ENCODE measurements at regions of chr3 and their contacts with region 1.

Region 1: GRCh38 chr3:160003520-160004128 is 15.0 kb downstream of the IL12A start:
- DNase-seq: no peak
- H3K4me3 ChIP-seq: no peak overlapping the region
- H3K27ac ChIP-seq: no peak overlapping the region
- H3K27me3 ChIP-seq: no peaks in the 10 kb centered on the region
- CTCF ChIP-seq: peak; percentile 41

Region 2: GRCh38 chr3:159828542-159828943 is 175.1 kb before region 1 on chr3:
- CTCF ChIA-PET with region 1: interaction called, 122 read pairs
- POLR2A ChIA-PET with region 1: no interaction called
- DNase-seq: no peak
- H3K4me3 ChIP-seq: no peak overlapping the region
- H3K27ac ChIP-seq: no peak overlapping the region
- H3K27me3 ChIP-seq: no peaks in the 10 kb centered on the region
- CTCF ChIP-seq: peak; percentile 56

Region 3: DNA sequence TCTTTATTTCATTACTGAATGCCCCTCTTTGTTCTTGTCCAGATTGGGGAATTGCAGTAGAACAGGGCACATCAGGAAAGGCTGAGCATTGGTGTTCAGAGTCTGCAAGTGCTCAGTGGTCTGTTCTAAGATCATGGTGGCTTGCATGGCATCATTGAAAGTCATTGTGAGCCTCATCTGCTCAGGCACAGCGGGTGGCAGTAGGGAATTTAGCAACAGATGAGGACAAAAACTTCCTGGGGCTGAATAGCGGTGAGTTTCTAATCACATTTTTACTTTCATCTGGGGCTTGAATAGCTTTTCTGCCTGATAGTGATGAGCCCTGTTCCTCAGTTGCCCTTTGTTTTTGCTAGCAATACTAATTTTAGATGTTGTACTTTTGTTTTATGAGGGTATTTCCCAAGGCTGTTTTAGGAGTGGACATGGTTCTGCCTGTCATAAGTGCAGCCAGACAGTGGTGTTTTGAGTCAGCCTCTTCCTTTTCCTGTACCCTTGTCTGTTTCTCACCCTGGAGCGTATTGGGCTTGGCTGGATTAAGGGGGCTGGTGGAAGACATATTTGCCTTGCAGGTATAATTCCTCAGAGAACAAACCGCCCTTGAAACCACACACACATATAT is 142.1 kb before region 1 on chr3:
- CTCF ChIA-PET with region 1: interaction called, 18 read pairs
- POLR2A ChIA-PET with region 1: no interaction called
- DNase-seq: no peak
- H3K4me3 ChIP-seq: no peak overlapping the region
- H3K27ac ChIP-seq: no peak overlapping the region
- H3K27me3 ChIP-seq: no peaks in the 10 kb centered on the region
- CTCF ChIP-seq: no peak

Region 4: GRCh38 chr3:159884661-159885402 is 118.8 kb before region 1 on chr3:
- CTCF ChIA-PET with region 1: interaction called, 685 read pairs
- POLR2A ChIA-PET with region 1: no interaction called
- DNase-seq: no peak
- H3K4me3 ChIP-seq: no peak overlapping the region
- H3K27ac ChIP-seq: no peak overlapping the region
- H3K27me3 ChIP-seq: no peaks in the 10 kb centered on the region
- CTCF ChIP-seq: peak; percentile 58

Region 5: GRCh38 chr3:159929435-159930141 is 74.0 kb before region 1 on chr3:
- CTCF ChIA-PET with region 1: interaction called, 72 read pairs
- POLR2A ChIA-PET with region 1: interaction called, 4 read pairs
- DNase-seq: peak; percentile 58
- H3K4me3 ChIP-seq: no peak overlapping the region
- H3K27ac ChIP-seq: peak overlapping the region; percentile 92
- H3K27me3 ChIP-seq: no peaks in the 10 kb centered on the region
- CTCF ChIP-seq: peak; percentile 69

Region 6: GRCh38 chr3:159988617-159989271 is 14.9 kb before region 1 on chr3 and contains the start of gene IL12A:
- CTCF ChIA-PET with region 1: interaction called, 87 read pairs
- POLR2A ChIA-PET with region 1: no interaction called
- DNase-seq: no peak
- H3K4me3 ChIP-seq: peak within 1 kb of the TSS; percentile 70
- H3K27ac ChIP-seq: no peak within 1 kb of the TSS
- H3K27me3 ChIP-seq: no peaks in the 10 kb centered on the region
- CTCF ChIP-seq: peak; percentile 92
- polyA plus RNA-seq, gene IL12A: 2.3 and 3.6 TPM in 2 replicates